ENCODE measurements at regions of chr20 and their contacts with region 1.

Region 1: GRCh38 chr20:38290832-38291581 is 12.9 kb upstream of the BPI start:
- DNase-seq: peak in 1 of 2 donors; percentile 74
- ATAC-seq: peak; percentile 68
- H3K4me3 ChIP-seq: no peak overlapping the region
- H3K27ac ChIP-seq: no peak overlapping the region
- H3K4me1 ChIP-seq: no peaks in the 10 kb centered on the region
- H3K27me3 ChIP-seq: no peaks in the 10 kb centered on the region

Region 2: DNA sequence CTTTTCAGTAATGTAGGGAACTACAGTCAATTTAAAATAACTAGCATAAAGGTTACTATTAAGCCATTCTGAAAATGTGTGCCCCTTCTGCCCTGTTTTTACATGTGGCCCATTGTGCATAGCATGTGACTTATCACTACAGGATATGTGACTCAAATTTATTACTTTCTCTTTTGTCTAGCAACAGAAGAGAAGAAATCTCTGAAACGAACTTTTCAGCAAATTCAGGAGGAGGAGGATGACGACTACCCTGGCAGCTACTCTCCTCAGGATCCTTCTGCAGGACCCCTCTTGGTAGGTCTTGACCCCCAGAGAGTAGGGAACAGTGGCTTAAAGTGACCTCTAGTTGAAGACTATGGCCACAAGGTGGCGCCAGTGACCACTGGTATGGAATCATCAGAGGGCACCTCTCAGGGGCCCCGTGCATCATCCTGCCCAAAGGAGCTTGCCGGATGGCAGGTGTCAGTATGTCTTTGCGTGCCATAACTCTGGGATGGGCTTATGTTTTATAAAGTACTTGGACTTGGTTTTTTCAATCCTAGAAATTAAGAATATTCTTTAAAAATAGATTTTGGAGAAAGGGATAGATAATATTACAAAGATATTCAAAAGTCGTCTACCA is 233.5 kb before region 1 on chr20:
- intact Hi-C with region 1: loop called in 1 of 2 experiments (anchors 10 kb)
- DNase-seq: peak; percentile 88 to 95
- ATAC-seq: peak; percentile 85
- H3K4me3 ChIP-seq: no peak overlapping the region
- H3K27ac ChIP-seq: no peak overlapping the region
- H3K4me1 ChIP-seq: no peaks in the 10 kb centered on the region
- H3K27me3 ChIP-seq: no peaks in the 10 kb centered on the region

Region 3: GRCh38 chr20:38229376-38230252 is 61.4 kb before region 1 on chr20:
- intact Hi-C with region 1: loop called in 1 of 2 experiments (anchors 2 kb)
- DNase-seq: peak in 1 of 2 donors; percentile 47
- ATAC-seq: no peak
- H3K4me3 ChIP-seq: no peak overlapping the region
- H3K27ac ChIP-seq: no peak overlapping the region
- H3K4me1 ChIP-seq: no peaks in the 10 kb centered on the region
- H3K27me3 ChIP-seq: no peaks in the 10 kb centered on the region

Region 4: DNA sequence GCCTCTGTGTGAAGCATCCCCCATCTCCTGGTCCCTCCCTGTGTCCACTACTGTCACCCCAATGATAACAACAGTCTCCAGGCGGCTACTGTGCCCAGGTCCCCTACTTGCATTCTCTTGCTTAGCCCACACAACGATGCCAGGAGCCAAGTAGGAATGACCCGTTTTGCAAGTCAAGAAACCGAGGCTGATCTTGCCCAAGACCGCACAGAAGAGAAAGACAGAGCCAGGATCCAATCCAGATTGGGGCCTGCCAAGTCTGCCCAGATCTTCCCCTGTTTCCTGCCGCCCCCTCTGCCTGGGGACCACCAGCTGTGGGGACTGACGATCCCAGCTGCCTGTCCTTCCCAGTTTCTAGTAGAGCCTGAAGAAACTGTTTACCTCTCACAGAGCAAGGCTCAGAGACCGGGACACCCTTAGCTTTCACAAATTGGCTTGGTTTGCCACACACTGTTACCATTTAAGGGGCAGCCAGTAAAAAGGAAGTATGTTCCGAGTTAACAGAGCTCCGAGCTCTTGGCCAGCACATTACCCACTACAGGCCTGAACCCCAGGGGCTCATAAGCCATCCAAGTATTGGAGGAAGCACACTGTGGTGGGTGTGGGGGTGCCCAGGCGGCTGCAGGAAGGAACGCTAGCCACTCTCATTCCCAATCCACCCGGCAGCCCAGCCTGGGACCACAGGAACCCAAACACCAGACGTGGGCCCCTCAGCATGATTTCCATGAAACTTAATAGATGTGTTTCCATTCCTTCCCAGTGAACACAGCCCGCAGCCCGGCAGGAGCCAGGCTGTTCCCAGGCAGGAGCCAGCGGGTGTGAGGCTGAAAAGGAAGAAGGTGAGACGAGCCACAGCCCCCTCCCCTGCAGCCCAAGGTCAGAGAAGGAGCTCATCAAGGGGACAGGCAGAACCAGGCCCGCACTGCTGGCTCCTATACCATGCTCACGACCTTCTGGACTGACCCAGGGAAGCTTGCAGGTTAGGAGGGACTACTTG is 38.4 kb before region 1 on chr20:
- intact Hi-C with region 1: loop called in 1 of 2 experiments (anchors 5 kb)
- DNase-seq: no peak
- ATAC-seq: peak; percentile 61
- H3K4me3 ChIP-seq: no peak overlapping the region
- H3K27ac ChIP-seq: peak overlapping the region; percentile 93
- H3K4me1 ChIP-seq: peaks cover 0 to 2% of the 10 kb centered on the region in 2 donors
- H3K27me3 ChIP-seq: no peaks in the 10 kb centered on the region

Region 5: GRCh38 chr20:38599410-38599938 is 308.5 kb after region 1 on chr20:
- intact Hi-C with region 1: no loop called
- DNase-seq: no peak
- ATAC-seq: no peak
- H3K4me3 ChIP-seq: no peak overlapping the region
- H3K27ac ChIP-seq: no peak overlapping the region
- H3K4me1 ChIP-seq: no peaks in the 10 kb centered on the region
- H3K27me3 ChIP-seq: peaks cover 0 to 3% of the 10 kb centered on the region in 2 donors

Measured in aorta (tissue), 5 donors.